ENCODE measurements at regions of chr7 and their contacts with region 1.

Region 1: DNA sequence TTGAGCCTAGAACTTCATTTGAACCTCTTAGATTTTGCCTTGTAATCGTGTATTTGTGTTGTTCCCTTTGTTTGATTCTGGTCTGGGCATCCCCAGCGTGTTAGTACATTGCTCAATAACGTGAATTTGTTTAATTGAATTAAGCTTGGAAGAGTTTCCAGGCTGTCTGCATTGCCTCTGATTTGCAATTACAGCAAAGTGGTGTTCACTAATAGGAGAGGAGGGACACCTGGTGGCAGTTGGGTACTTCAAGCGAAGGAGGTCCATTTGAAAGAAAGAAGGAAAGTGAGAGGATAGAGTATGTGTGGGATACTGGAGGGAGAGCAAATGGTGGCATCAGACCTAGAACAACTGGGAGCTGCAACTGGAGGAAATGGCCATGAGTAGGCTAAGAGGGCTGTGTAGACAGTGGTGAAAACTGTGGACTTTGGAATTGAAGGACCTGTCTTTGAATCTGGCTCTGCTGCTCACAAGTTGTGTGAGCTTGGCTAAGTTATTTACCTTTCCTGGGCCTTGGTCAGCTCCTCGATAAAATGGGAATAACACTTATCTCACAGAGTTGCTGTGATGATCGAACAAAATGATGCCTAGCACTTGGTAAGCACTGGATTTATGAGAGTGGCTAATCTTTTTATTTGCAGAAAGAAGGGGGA is 15.1 kb downstream of the LSMEM1 start:
- H3K4me3 ChIP-seq: no peak overlapping the region
- H3K27ac ChIP-seq: no peak overlapping the region
- H3K4me1 ChIP-seq: no peaks in the 10 kb centered on the region
- CTCF ChIP-seq: peak; percentile 89

Region 2: GRCh38 chr7:111741811-111742240 is 754.1 kb before region 1 on chr7:
- CTCF ChIA-PET with region 1: interaction called, 21 read pairs
- POLR2A ChIA-PET with region 1: no interaction called
- H3K4me3 ChIP-seq: no peak overlapping the region
- H3K27ac ChIP-seq: no peak overlapping the region
- H3K4me1 ChIP-seq: no peaks in the 10 kb centered on the region
- CTCF ChIP-seq: peak; percentile 55; the same call in 1 of the 2 replicates

Region 3: DNA sequence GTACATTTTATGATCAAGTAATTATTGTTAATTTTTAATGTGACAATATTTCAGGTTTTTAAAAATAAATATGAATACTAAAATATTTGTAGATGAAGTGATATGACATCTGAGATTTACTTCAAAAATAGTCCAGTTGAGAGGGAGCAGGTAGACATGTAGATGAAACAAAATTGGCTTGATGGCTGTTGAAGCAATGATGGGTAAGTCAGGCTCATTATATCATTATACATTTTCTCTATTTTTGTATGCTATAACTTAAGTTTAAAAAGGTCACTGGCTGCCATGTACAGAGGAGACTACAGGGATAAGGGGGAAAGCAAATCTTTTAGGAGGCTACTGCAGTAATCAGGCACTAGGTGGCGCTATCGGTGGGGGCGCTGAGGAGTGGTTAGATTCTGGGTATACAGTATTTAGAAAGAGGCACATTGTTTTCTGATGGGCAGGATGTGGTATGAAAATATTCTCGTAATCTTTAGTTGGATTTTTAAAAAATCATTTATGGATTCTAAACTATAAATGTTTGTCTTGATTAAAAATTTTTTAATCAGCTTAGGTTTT is 743.8 kb before region 1 on chr7:
- CTCF ChIA-PET with region 1: interaction called, 12 read pairs
- POLR2A ChIA-PET with region 1: no interaction called
- H3K4me3 ChIP-seq: no peak overlapping the region
- H3K27ac ChIP-seq: no peak overlapping the region
- H3K4me1 ChIP-seq: no peaks in the 10 kb centered on the region
- CTCF ChIP-seq: 0 out of 2 replicates have a peak, but pooled peaks have one; percentile 33

Region 4: DNA sequence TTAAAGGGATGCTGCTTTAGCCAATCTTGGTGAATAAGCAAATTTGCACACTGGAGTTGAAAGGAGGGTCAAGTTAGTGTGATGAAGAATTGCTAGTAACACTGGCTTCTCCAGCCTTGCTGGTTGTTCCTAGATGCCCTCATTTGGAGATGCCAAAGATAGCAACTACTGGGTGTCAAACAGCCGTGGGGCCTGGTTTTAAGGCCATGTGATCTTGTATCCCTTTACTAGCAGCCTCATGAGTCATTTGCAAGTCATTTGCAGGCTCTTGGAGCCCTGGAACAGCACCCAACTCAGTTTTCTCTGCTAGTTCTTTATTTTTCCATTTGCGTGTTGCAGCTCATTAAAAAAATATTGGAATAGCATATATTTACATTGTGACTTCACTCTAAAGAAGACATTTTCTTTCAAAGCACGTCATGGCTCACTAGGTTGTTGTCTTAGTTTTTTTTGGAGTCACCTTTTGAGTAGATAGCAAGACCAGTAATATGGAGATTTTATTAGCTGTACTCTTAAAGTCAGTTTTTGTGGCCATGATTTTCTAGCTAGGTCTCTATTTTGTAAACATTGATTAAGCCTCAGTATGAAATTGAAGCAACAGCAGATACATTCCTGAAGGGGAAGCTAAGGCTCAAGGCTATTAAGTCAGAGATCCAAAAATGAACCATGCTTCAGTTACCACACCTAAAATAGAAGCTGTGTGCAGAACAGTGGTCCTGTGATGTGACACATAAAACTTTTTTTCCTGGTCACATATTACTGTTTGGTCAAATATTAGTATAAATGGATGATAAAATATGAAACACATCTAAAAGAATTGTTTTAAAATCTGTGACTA is 13.9 kb before region 1 on chr7:
- CTCF ChIA-PET with region 1: interaction called, 26 read pairs
- POLR2A ChIA-PET with region 1: no interaction called
- H3K4me3 ChIP-seq: no peak overlapping the region
- H3K27ac ChIP-seq: no peak overlapping the region
- H3K4me1 ChIP-seq: peaks cover 5% of the 10 kb centered on the region
- CTCF ChIP-seq: no peak